ENCODE measurements at regions of chr1 and their contacts with region 1.

Region 1: DNA sequence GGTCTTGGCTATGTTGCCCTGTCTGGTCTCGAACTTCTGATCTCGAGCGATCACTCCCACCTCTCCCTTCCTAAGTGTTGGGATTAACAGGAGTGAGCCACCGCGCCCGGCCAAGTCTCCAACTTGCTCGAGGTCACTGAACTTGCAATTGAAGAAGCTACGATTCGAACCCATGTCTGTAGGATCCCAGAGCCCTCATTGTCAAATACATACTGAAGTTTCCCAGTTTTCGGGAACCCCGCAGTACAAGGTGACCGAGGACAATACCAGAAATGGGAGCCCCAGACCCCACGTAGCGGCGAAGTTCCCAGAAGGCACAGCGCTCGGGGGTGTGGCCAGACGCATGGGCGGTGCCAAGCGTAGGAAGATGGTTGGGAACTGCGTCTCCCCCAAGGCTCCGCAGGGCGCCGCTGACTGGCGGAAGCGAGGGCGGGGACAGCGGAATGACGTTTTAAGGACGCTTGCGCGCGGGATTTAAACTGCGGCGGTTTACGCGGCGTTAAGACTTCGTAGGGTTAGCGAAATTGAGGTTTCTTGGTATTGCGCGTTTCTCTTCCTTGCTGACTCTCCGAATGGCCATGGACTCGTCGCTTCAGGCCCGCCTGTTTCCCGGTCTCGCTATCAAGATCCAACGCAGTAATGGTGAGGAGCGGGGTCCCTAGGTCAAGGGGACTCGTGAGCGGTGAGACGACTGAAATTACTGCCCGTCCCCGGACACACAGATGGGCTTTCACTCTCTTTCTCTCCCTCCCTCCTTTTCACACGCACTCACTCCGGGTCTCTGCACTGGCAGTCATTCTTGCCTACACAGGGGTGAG is at the start of gene KIF2C:
- DNase-seq: peak; percentile 99
- ATAC-seq: peak; percentile 98
- H3K4me3 Mint-ChIP-seq: peak within 1 kb of the TSS; percentile 98
- H3K27ac Mint-ChIP-seq: peak within 1 kb of the TSS; percentile 94
- H3K4me1 Mint-ChIP-seq: peaks cover 26% of the 10 kb centered on the region
- H3K27me3 Mint-ChIP-seq: no peaks in the 10 kb centered on the region
- total RNA-seq, gene KIF2C: 101 to 119 TPM

Region 2: DNA sequence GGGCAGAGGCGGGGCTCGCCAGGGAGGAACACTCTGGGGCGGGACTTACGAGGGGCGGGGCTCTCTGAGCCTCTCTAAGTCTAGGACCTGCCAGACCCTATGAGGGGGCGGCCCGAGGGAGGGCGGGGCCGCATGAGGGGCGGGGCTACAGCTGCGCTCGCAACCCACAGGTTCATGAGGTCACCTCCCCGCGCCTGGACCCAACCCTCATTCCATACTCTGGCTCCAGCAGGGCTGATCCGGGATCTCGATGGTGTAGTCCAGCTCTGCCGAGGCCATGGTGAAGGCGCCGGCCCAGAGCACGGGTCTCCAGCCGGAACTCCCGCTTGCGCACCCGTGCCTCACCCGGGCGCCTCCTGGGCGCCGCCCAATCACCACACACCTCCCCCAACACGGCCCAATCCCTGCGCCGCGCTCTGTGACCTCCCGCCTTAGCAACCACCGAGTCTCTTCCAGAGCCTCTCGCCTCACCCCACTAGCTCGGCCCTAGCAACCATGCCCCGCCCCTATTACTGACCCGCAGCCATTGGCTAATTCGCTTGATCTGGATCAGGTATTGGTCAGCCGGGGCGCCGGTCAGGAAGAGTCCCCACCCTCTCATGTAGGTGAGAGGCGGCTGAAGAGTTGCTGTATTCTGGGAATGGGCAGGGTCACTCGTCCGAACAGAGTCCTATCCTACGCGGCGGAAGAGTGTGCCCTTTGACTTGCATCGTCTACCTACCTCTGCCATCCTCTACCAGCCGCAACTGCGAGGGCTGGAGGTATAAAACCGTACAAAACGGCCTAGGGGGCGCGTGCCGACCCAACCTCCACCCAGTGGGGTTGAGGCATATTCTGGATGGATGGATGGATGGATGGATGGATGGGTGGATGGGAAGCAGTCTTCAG is 65.2 kb before region 1 on chr1 and contains the starts of genes ARMH1 and TMEM53:
- CTCF ChIA-PET with region 1: no interaction called
- POLR2A ChIA-PET with region 1: no interaction called
- intact Hi-C with region 1: loop called in 1 of 2 experiments (anchors 1 kb)
- DNase-seq: peak; percentile 99
- ATAC-seq: peak; percentile 97
- H3K4me3 Mint-ChIP-seq: peak within 1 kb of the TSS; percentile 78
- H3K27ac Mint-ChIP-seq: peak within 1 kb of the TSS; percentile 84
- H3K4me1 Mint-ChIP-seq: peaks cover 24% of the 10 kb centered on the region
- H3K27me3 Mint-ChIP-seq: no peaks in the 10 kb centered on the region
- total RNA-seq, gene ARMH1: 67.3 to 75.1 TPM
- total RNA-seq, gene TMEM53: 4.3 to 5.5 TPM

Region 3: DNA sequence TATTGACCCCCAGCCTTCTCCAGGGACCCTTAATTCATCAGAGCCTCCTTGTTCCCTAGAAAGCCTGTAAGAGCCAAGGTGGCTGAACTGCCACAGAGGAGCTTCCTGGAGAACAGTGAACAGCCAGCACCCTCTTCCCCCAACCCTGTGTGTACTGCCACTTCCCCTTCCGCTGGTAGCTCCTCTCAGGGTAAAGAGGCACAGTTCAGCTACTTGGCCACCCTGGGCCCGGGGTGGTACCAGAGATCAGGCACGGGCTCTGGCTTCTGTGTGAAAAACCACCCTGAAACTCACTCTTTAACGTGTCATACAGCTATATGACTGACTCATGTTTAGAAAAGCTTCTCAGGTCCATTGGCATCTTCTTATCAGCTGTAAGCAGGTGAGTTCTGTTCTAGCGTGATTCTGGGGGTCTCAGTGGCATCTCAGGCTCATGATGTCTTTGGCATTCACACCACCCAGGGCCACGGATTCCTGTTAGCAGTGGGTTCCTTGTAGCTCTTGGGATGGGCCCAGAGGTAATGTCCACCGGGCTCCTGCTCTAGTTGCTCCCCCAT is 42.7 kb before region 1 on chr1:
- CTCF ChIA-PET with region 1: no interaction called
- POLR2A ChIA-PET with region 1: no interaction called
- intact Hi-C with region 1: no loop called
- DNase-seq: peak; percentile 71
- ATAC-seq: peak; percentile 91
- H3K4me3 Mint-ChIP-seq: no peak overlapping the region
- H3K27ac Mint-ChIP-seq: peak overlapping the region; percentile 77
- H3K4me1 Mint-ChIP-seq: peaks cover 28% of the 10 kb centered on the region
- H3K27me3 Mint-ChIP-seq: no peaks in the 10 kb centered on the region

Region 4: GRCh38 chr1:44819608-44820327 is 80.2 kb after region 1 on chr1:
- CTCF ChIA-PET with region 1: no interaction called
- POLR2A ChIA-PET with region 1: interaction called, 11 read pairs
- intact Hi-C with region 1: loop called in 1 of 2 experiments (anchors 1 kb)
- DNase-seq: peak; percentile 88
- ATAC-seq: peak; percentile 88
- H3K4me3 Mint-ChIP-seq: peak overlapping the region; percentile 85
- H3K27ac Mint-ChIP-seq: peak overlapping the region; percentile 100
- H3K4me1 Mint-ChIP-seq: peaks cover 37% of the 10 kb centered on the region
- H3K27me3 Mint-ChIP-seq: no peaks in the 10 kb centered on the region

Region 5: GRCh38 chr1:45246760-45247159 is 507.2 kb after region 1 on chr1:
- CTCF ChIA-PET with region 1: no interaction called
- POLR2A ChIA-PET with region 1: no interaction called
- intact Hi-C with region 1: loop called in 1 of 2 experiments (anchors 2 kb)
- DNase-seq: peak; percentile 24
- ATAC-seq: peak; percentile 92
- H3K4me3 Mint-ChIP-seq: no peak overlapping the region
- H3K27ac Mint-ChIP-seq: peak overlapping the region; percentile 93
- H3K4me1 Mint-ChIP-seq: peaks cover 18% of the 10 kb centered on the region
- H3K27me3 Mint-ChIP-seq: peaks cover 4% of the 10 kb centered on the region